ENCODE measurements at regions of chr20 and their contacts with region 1.

Region 1: GRCh38 chr20:31723319-31724078 is 831 bp upstream of the BCL2L1 start:
- DNase-seq: peak; percentile 95
- ATAC-seq: peak; percentile 84
- H3K4me3 ChIP-seq: peak overlapping the region; percentile 82 to 87
- H3K27ac ChIP-seq: peak overlapping the region; percentile 98
- H3K4me1 ChIP-seq: peaks cover 43 to 73% of the 10 kb centered on the region in 2 experiments
- H3K27me3 ChIP-seq: no peaks in the 10 kb centered on the region
- CTCF ChIP-seq: peak in 2 of 3 experiments; percentile 89 to 91; a peak in 4 of 6 replicates
- POLR2A ChIP-seq: peak; percentile 67
- RAD21 ChIP-seq: no peak

Region 2: DNA sequence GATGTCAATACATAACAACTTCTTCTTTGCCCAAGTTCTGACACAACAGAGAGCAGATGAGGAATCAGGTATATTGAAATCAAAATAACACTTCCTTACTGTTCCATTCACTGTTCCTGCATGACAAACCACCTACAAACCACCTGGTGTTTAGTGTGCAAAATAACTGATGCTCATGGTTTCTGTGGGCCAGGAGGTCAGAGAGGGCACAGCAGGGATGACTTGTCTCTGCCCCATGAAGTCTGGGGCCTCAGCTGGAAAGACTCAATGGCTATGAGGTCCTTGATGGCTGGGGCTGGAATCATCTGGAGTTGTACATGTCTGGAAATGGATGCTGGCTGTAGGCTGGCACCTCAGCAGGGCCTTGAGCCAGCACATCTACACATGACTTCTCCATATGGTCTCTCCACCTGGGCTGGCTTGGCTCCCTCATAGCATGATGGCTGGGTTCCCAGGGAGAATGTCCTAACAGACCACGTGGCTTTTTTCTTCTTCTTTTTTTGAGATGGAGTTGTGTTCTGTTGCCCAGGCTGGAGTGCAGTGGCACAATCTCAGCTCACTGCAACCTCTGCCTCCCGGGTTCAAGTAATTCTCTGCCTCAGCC is 93.2 kb before region 1 on chr20:
- CTCF ChIA-PET with region 1: interaction called, 84 read pairs
- POLR2A ChIA-PET with region 1: interaction called, 18 read pairs
- RAD21 ChIA-PET with region 1: interaction called, 10 to 14 read pairs
- intact Hi-C with region 1: loop called (anchors 1 kb)
- DNase-seq: no peak
- ATAC-seq: no peak
- H3K4me3 ChIP-seq: no peak overlapping the region
- H3K27ac ChIP-seq: no peak overlapping the region
- H3K4me1 ChIP-seq: peaks cover 0 to 6% of the 10 kb centered on the region in 2 experiments; a peak in 1 of 4 replicates
- H3K27me3 ChIP-seq: no peaks in the 10 kb centered on the region
- CTCF ChIP-seq: no peak
- POLR2A ChIP-seq: no peak
- RAD21 ChIP-seq: no peak

Region 3: GRCh38 chr20:31698803-31699718 is 24.4 kb before region 1 on chr20:
- CTCF ChIA-PET with region 1: interaction called, 18 read pairs
- POLR2A ChIA-PET with region 1: interaction called, 28 read pairs
- RAD21 ChIA-PET with region 1: no interaction called
- intact Hi-C with region 1: loop called (anchors 1 kb)
- DNase-seq: peak; percentile 44
- ATAC-seq: no peak
- H3K4me3 ChIP-seq: peak overlapping the region in 1 of 2 experiments; percentile 10; a peak in 1 of 4 replicates
- H3K27ac ChIP-seq: peak overlapping the region; percentile 81
- H3K4me1 ChIP-seq: peaks cover 83 to 99% of the 10 kb centered on the region in 2 experiments
- H3K27me3 ChIP-seq: no peaks in the 10 kb centered on the region
- CTCF ChIP-seq: no peak
- POLR2A ChIP-seq: no peak
- RAD21 ChIP-seq: no peak

Region 4: DNA sequence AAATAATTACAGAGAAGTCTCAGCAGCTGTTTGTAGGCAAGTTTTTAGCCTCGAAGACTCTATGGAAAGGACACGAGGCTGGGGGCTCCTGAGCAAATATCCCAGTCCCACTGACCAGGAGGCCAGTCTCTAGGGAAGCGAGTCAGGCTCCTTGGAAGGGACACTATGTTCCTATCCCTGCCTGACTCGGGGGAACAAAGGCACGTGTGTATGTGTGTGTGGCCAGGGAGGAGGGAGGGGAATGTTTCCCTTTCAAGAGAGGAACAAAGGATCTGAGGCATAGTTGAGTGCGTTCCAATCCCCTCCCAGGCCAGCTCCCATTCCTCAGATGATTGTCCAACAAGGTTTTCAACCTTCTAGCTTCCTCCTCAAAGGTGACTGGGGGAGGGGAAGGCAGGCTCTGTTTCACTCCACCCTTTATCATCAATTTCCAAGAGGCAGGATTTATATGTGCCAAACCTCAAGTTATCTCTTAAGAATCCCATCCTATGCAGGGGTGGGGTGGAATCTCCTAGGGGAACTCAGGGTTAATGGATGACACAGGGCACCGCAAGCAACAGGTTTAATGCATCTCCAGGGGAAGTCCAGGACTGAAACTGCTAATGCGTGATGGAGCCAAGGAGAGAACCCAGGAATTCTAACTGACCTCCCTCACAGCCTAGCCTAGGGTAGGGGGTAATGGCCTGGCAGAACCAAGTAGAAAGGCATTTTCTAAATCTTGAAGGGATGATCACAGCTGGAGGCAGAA is 10.8 kb before region 1 on chr20:
- CTCF ChIA-PET with region 1: interaction called, 22 read pairs
- POLR2A ChIA-PET with region 1: interaction called, 33 read pairs
- RAD21 ChIA-PET with region 1: no interaction called
- intact Hi-C with region 1: no loop called
- DNase-seq: peak; percentile 92
- ATAC-seq: peak; percentile 78
- H3K4me3 ChIP-seq: peak overlapping the region; percentile 5 to 46
- H3K27ac ChIP-seq: peak overlapping the region; percentile 98
- H3K4me1 ChIP-seq: peaks cover 91 to 99% of the 10 kb centered on the region in 2 experiments
- H3K27me3 ChIP-seq: no peaks in the 10 kb centered on the region
- CTCF ChIP-seq: no peak
- POLR2A ChIP-seq: no peak
- RAD21 ChIP-seq: no peak

Region 5: DNA sequence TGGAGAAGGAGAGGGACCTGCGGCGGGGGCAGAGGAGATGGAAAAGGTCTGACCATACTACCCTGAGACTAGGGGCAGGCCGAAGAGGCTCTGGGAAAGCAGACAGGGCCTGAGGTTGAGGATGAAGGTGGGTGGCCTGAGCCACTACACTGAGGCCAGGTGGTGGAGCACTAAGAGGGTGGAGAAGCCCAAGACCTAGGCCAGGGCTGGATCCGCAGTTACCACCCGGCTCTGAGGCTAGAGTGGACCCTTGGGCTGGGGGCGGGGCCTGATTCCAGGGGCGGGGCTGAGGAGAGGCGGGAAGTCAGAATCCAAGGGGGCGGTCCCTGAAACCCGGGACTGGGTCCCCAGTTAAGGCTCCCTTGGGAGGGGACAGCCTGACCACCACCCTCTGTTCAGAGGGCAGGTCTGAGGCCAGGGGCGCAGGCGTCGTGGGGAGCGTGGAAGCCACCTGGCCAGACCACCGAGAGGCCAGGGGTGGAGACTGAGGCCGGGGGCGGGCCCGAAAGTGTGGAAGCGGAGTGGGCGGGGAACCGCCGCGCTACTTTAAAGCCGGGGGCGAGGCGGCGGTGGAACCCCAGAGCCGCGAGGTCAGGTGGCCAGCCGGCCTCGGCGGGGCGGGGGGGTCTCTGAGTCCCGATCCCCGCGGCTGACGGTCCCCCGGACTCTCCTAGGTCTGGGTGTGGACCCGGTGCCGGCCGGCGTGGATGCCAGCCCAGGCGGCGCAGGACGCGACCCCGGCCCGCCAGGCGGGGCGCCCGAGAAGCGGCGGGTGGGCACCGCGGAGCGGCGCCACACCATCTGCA is 295.0 kb after region 1 on chr20:
- CTCF ChIA-PET with region 1: no interaction called
- POLR2A ChIA-PET with region 1: no interaction called
- RAD21 ChIA-PET with region 1: no interaction called
- intact Hi-C with region 1: no loop called
- DNase-seq: peak; percentile 81
- ATAC-seq: peak; percentile 85
- H3K4me3 ChIP-seq: peak overlapping the region; percentile 42 to 58
- H3K27ac ChIP-seq: peak overlapping the region; percentile 78
- H3K4me1 ChIP-seq: peaks cover 9 to 24% of the 10 kb centered on the region in 2 experiments
- H3K27me3 ChIP-seq: peaks cover 10% of the 10 kb centered on the region
- CTCF ChIP-seq: no peak
- POLR2A ChIP-seq: peak; percentile 22
- RAD21 ChIP-seq: no peak